Spleen (tissue), 13 donors: ENCODE measurements at regions of chr7 and their contacts with region 1.

Region 1: DNA sequence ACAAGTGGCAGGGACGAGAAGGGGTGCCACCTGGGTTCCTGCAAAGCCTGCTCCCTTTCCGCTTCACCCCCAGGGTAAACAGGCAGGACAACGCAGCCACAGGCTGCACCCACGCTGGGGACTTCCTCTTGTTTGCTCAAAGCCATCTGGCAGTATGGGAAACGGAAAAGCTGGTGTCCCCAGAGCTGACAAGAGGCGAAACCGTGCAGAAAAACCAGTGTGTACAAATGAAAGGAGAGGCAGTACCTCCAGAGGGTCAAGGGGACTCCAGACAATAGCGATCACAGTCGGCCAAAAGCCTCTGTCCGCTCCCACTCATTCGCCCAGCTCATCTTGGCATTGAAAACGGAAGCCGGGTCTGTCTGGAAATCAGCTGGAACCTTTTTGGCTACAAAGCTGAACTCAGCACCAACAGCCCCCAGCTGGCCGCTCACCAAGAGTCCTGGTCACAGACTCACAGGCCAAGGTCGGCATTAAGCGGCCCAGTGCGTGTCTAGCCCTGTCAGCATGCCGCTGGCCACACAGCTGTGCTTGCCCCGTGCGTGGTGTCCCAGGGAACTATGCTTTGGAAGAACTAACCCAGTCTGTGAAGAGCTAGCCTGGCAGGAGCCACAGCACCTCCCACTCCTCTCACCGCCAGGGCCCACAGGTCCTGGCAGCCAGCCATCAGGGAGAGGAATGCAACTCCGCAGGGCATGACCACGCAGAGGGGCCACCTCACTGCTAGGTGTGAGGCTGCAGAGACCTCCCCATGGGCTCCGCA is 10.4 kb downstream of the TNS3 start:
- DNase-seq: peak; percentile 92
- H3K4me3 ChIP-seq: peak overlapping the region in 2 of 8 donors; percentile 22 to 46
- H3K27ac ChIP-seq: peak overlapping the region; percentile 77 to 93 (median 88)
- H3K4me1 ChIP-seq: peaks cover 55 to 100% (median 95%) of the 10 kb centered on the region in 6 donors
- H3K27me3 ChIP-seq: no peaks in the 10 kb centered on the region
- CTCF ChIP-seq: no peak
- POLR2A ChIP-seq: no peak

Region 2: DNA sequence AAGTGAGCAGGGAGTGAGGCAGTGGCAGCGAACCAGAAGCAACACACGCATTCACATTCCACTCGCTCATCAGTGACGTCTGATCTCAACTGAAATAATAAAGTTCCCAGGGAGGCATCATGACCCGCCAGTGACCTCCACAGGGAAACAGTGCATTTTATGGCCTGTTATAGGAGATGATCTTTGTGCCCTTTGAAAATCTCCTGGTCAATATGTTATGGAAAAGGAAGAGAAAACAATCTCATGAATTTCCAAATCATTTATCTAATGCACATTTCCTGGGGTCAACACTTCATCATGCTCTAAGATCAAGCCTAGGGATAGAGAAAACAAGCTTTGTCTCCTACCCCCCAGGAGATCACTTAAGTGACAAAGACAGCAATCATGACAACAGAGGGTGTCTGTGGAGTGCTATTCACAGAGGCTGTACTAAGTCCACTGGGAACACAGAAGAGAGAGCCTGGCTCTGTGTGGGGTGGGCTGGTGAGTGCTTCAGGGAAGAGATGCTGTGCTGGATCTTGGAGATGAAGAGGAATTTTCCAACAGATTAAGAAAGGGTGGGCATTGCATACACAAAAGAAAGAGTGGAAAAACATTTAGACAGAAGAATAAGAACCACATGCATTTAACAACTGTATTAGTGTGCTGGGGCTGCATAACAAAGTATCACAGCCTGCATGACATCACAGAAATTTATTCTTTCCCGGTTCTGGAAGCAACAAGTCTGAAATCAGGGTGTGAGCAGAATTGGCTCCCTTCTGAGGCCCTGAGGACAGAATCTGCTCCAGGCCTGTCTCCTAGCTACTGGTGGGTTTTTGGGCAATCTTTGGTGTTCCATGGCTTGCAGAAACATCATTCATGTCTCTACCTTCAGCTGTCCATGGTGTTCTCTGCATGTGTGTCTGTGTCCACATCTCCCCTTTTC is 1036.6 kb before region 1 on chr7:
- intact Hi-C with region 1: no loop called
- DNase-seq: no peak
- H3K4me3 ChIP-seq: no peak overlapping the region
- H3K27ac ChIP-seq: peak overlapping the region in 3 of 8 donors; percentile 20 to 57 (median 34)
- H3K4me1 ChIP-seq: no peaks in the 10 kb centered on the region
- H3K27me3 ChIP-seq: no peaks in the 10 kb centered on the region
- CTCF ChIP-seq: no peak
- POLR2A ChIP-seq: no peak

Region 3: GRCh38 chr7:47104206-47104549 is 467.3 kb before region 1 on chr7:
- intact Hi-C with region 1: no loop called
- DNase-seq: no peak
- H3K4me3 ChIP-seq: no peak overlapping the region
- H3K27ac ChIP-seq: no peak overlapping the region
- H3K4me1 ChIP-seq: peaks cover 0 to 5% (median 0%) of the 10 kb centered on the region in 6 donors
- H3K27me3 ChIP-seq: no peaks in the 10 kb centered on the region
- CTCF ChIP-seq: no peak
- POLR2A ChIP-seq: no peak

Region 4: DNA sequence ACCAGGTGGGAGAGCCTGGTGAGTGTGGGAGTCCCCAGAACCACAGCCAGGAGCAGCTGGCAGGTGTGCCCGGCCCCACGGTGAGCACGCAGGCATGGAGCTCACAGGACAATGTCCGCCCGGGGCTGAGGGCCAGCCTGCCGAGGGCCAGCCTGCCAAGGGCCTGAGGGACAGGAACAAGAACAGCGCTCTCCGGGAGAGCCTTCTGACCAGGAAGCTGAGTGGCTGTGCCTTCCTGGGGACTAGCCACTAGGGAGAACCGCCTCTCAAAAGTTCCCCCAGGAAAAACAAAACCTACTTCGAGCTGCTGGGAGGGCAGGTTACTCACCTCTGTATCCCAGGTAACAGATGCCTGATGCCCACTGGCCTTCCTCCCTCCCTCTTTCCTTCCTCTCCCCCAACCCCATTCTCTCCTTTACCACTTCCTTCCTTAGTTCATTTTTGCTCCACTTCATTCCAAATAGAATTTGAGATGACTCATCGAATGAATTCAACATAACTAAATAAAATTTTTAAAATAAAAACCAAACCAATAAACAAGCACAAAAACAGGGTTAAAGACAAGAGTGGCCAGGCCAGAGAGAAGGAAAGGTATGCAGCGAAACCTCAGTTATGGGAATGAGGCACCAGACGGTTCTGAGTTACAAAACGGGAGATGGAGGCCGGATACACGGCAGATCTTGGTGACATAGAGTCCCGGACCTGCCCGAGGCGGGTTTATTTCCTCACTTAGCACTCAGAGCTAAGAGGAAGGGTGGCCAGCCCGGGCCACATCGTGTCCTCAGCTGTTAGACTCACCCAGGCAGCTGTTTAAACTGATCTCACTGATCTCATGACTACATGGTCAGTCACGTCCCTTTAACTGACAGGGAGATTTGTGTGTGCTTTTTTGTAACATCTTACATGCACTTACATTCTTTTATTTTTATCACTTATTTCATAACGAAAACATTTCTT is 118.1 kb before region 1 on chr7:
- intact Hi-C with region 1: loop called (anchors 10 kb)
- DNase-seq: no peak
- H3K4me3 ChIP-seq: peak overlapping the region in 4 of 8 donors; percentile 10 to 38 (median 11)
- H3K27ac ChIP-seq: peak overlapping the region; percentile 30 to 86 (median 78)
- H3K4me1 ChIP-seq: peaks cover 16 to 62% (median 40%) of the 10 kb centered on the region in 6 donors
- H3K27me3 ChIP-seq: no peaks in the 10 kb centered on the region
- CTCF ChIP-seq: no peak
- POLR2A ChIP-seq: no peak

Region 5: GRCh38 chr7:47677667-47678111 is 106.2 kb after region 1 on chr7:
- intact Hi-C with region 1: no loop called
- DNase-seq: no peak
- H3K4me3 ChIP-seq: no peak overlapping the region
- H3K27ac ChIP-seq: peak overlapping the region in 4 of 8 donors; percentile 20 to 64 (median 54)
- H3K4me1 ChIP-seq: peaks cover 0 to 26% (median 10%) of the 10 kb centered on the region in 6 donors
- H3K27me3 ChIP-seq: no peaks in the 10 kb centered on the region
- CTCF ChIP-seq: no peak
- POLR2A ChIP-seq: no peak